ENCODE measurements at regions of chr14 and their contacts with region 1.

Region 1: DNA sequence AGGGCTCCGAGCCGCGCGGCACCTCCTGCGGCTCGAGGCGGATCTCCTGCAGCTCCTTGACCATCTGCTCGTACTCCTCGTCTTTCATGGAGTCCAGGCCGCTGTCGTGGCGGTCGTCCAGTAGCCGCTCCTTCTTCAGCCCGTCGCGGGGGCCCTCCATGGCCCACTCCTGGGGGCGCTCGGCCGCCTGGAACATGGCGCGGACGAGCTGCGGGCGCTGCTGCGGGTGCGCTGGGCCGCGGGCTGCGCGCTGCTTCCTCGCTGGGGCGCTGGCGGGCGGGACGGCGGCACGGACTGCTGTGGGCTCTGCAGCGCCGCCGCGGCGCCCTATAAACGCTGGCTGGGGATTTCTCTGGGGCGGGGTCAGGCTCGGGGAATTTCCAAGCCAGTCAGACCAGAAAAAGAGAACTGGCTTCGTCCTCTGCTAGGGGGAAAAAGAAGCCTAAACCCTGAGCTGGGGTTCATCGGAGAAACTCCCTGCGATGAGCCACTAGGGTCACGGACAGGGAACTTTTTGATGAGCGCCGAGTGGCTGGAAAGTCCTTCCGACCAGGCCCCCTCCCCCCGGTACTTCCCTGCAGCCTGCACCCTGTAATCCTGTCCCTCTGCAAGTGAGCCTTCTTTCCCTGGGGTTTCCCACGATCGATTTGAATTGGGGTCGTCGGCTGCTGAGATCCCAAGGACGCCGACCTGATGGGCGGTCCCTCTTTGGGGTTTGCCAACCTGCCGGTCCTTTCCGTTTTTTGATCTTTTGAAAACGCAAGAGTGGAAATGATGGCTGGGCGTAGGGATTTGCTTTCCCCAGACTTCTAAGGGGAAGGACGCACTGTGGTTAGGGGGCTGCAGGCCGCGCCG is at the start of gene NFKBIA:
- DNase-seq: no peak
- H3K4me3 ChIP-seq: peak within 1 kb of the TSS; percentile 87
- CTCF ChIP-seq: peak; percentile 47

Region 2: GRCh38 chr14:35140718-35141581 is 263.7 kb before region 1 on chr14:
- CTCF ChIA-PET with region 1: interaction called, 573 read pairs
- POLR2A ChIA-PET with region 1: interaction called, 6 read pairs
- DNase-seq: no peak
- H3K4me3 ChIP-seq: no peak overlapping the region
- CTCF ChIP-seq: no peak

Region 3: DNA sequence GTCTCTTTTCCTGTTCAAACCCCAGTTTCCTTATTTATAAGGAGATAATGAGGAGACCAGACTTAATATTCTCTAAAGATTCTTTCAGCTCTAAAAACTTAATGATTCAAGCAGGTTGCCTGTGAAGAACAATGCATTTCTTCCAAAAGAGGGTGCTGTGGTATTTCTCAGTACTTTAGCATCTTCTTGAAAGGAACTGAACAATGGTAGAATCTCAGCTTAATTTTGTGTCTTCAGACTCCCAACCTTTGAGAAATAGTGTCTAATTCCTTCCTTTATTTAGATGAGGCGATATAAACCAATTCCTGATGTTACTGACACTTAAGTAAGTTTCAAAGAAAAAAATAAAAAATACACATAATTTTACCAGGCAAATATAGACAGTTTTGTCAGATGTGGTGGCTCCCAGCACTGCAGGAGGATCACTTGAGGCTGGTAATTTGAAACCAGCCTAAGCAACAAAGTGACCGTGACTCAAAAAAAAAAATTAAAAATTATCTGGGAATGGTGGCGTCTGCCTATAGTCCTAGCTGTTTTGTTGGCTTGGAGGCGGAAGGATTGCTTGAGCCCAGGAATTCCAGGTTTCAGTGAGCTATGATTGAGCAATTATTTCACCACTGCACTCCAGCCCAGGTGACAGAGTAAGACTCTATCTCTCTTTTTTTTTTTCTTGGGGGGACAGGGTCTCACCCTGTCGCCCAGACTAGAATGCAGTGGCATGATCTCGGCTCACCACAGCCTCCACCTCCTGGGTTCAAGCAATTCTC is 189.4 kb before region 1 on chr14:
- CTCF ChIA-PET with region 1: interaction called, 68 read pairs
- POLR2A ChIA-PET with region 1: interaction called, 9 read pairs
- DNase-seq: peak; percentile 29
- H3K4me3 ChIP-seq: no peak overlapping the region
- CTCF ChIP-seq: peak; percentile 45

Region 4: DNA sequence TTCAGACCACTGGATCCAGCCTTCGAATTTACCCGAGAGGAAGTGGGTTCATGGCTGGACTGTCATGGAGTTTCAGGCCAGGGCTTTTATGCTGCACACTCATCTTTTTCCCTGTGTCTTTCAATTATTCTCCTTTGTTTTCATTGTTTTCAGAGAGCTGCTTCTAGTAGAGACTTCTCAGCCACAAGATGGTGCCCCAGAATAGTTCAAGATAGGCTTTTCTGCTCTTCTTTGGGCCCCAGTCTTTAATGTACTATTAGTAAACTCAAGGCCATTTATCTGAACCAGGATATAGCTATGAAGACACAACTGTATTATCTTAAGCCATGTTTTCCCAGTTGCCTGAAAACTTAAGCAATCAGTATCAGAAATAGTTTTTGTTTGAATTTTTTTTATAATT is 142.9 kb before region 1 on chr14:
- CTCF ChIA-PET with region 1: interaction called, 11 read pairs
- POLR2A ChIA-PET with region 1: no interaction called
- DNase-seq: no peak
- H3K4me3 ChIP-seq: no peak overlapping the region
- CTCF ChIP-seq: no peak

Region 5: GRCh38 chr14:35365130-35366055 is 39.3 kb before region 1 on chr14:
- CTCF ChIA-PET with region 1: interaction called, 4 read pairs
- POLR2A ChIA-PET with region 1: interaction called, 18 read pairs
- DNase-seq: no peak
- H3K4me3 ChIP-seq: no peak overlapping the region
- CTCF ChIP-seq: no peak

Region 6: DNA sequence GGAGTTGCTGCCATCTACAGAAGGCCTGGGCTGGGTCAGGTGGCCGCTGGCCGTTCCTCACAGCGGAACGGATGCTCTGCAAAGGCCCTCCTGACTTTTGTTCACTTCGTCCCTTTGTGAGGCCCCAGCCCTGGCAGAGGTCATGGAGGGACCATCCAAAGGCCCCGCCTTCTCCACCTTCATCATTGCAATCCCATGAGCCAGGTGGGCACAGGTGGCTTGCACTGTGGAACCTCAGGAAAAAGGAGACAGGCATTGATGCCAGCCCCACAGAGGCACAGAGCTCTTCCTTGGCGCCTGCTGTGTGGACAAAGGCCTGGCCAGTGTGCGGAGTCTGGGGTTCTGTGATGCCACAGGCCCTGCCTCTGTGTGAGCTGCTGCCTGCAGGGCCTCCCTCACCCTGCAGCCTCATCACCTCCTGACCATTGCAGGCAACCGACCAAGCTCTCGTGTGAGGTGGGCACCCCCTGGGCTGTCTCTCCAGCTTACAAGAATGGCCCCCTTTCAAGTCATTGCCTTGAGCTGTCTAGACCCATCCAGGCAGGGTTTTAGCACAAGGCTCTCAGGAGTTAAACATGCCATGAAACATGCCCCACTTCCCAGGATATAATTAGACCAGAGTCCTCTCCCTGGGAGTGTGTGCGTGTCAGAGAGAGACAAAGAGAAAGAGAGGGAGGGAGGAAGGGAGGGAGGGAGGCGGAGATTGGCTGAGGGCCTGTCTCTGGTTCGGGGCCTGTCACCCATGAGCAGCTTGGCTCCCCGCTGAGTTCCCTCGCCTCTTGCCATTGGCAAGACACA is 19.4 kb before region 1 on chr14:
- CTCF ChIA-PET with region 1: interaction called, 8 read pairs
- POLR2A ChIA-PET with region 1: interaction called, 38 read pairs
- DNase-seq: peak; percentile 91
- H3K4me3 ChIP-seq: 0 out of 2 replicates have a peak overlapping the region, but pooled peaks have one; percentile 12
- CTCF ChIP-seq: no peak

Region 7: GRCh38 chr14:35416108-35416750 is 11.6 kb after region 1 on chr14:
- CTCF ChIA-PET with region 1: interaction called, 43 read pairs
- POLR2A ChIA-PET with region 1: interaction called, 7 read pairs
- DNase-seq: no peak
- H3K4me3 ChIP-seq: no peak overlapping the region
- CTCF ChIP-seq: no peak

Region 8: GRCh38 chr14:35435177-35435576 is 30.5 kb after region 1 on chr14:
- CTCF ChIA-PET with region 1: no interaction called
- POLR2A ChIA-PET with region 1: no interaction called
- DNase-seq: no peak
- H3K4me3 ChIP-seq: no peak overlapping the region
- CTCF ChIP-seq: no peak

Measured in AG04449 (cell line).